ENCODE measurements at regions of chr6 and their contacts with region 1.

Region 1: GRCh38 chr6:85637579-85637978 is 5.1 kb downstream of the SYNCRIP start:
- DNase-seq: no peak
- ATAC-seq: no peak
- H3K4me3 Mint-ChIP-seq: no peak overlapping the region
- H3K27ac Mint-ChIP-seq: peak overlapping the region; percentile 29
- H3K4me1 Mint-ChIP-seq: peaks cover 62% of the 10 kb centered on the region
- H3K27me3 Mint-ChIP-seq: no peaks in the 10 kb centered on the region

Region 2: DNA sequence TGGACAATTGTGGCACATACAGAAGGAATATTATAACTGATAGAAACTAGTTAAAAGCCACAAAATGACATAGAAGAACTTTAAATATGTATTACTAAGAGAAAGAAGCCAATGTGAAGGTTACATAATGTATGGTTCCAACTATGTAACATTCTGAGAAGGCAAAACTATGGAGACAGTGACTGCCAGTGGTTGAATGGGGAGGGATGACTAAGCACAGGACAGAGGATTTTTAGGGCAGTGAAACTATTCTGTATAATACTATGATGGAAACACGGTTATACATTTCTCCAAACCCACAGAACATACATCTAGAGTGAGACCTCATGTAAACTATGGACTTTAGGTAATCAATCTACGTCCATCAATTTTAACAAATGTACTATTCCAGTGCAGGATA is 17.3 kb before region 1 on chr6:
- CTCF ChIA-PET with region 1: interaction called, 4 read pairs
- POLR2A ChIA-PET with region 1: interaction called, 4 read pairs
- intact Hi-C with region 1: loop called (anchors 2 kb)
- DNase-seq: no peak
- ATAC-seq: peak; percentile 49
- H3K4me3 Mint-ChIP-seq: no peak overlapping the region
- H3K27ac Mint-ChIP-seq: no peak overlapping the region
- H3K4me1 Mint-ChIP-seq: peaks cover 33% of the 10 kb centered on the region
- H3K27me3 Mint-ChIP-seq: no peaks in the 10 kb centered on the region

Measured in activated CD4-positive, alpha-beta T cell treated with anti-CD3 and anti-CD28 coated beads for 36 hours (primary cell).